ENCODE measurements at regions of chr6 and their contacts with region 1.

Region 1: GRCh38 chr6:6724539-6725467 is 136.3 kb downstream of the LY86 start:
- DNase-seq: peak; percentile 69
- H3K4me3 Mint-ChIP-seq: peak overlapping the region; percentile 17
- H3K27ac Mint-ChIP-seq: peak overlapping the region; percentile 70
- H3K4me1 Mint-ChIP-seq: peaks cover 13% of the 10 kb centered on the region
- H3K27me3 Mint-ChIP-seq: peaks cover 29% of the 10 kb centered on the region

Region 2: DNA sequence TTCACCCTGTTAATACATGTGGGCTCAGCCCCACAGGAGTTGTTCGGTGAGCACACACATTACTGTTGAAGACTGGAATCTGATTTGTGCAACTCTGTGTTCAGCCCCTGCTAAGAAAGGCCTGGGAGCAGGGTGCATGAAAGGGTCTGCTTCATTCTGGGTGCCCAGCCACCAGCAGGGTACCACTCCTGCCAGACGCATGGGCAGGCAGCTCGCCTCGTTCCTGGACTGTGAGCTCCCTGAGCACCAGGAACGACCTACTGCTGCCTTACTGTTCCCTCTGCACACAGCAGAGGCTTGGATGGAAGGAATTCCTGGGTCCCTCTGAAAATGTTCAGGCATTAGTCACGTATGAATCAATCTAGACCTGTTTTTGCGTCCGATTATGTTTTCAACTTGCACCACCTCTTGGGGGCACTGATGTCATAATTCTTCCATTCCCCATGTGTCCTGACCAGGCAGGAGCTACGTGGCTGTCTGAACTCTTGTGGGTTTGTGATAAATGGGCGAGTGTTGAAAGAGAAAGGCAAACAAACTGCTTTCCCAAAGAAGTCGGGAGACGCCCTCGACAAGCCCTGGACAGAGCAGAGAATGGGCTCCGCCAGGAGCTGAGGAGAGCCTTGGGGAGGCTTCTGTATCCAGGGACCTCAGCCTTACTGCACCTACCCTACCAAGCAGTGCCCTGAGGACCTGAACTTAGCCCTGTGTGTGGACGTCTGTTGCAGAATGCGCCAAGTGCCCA is 12.4 kb before region 1 on chr6:
- CTCF ChIA-PET with region 1: interaction called, 19 read pairs
- POLR2A ChIA-PET with region 1: no interaction called
- DNase-seq: no peak
- H3K4me3 Mint-ChIP-seq: peak overlapping the region; percentile 48
- H3K27ac Mint-ChIP-seq: peak overlapping the region; percentile 67
- H3K4me1 Mint-ChIP-seq: peaks cover 40% of the 10 kb centered on the region
- H3K27me3 Mint-ChIP-seq: peaks cover 15% of the 10 kb centered on the region

Region 3: DNA sequence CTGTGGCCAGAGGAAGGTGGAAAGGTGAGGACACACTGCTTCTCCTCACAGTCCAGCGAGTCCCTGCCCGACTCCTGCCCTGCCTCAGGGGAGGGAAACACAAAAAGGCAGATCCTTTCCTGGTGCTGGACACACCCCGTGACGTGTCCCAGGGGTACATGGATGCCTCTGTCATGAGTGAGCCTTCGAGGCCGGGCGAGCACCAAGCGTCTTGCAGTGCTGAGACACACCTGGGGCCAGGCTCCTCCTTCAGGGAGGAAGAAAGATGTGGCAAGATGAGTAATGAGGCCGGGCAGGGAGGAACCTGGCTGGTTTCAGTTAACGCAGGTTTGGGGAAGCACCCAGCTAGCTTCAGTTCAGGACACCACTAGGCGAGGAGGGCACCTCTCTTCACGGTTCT is 78.8 kb after region 1 on chr6:
- CTCF ChIA-PET with region 1: no interaction called
- POLR2A ChIA-PET with region 1: no interaction called
- DNase-seq: peak; percentile 21
- H3K4me3 Mint-ChIP-seq: no peak overlapping the region
- H3K27ac Mint-ChIP-seq: no peak overlapping the region
- H3K4me1 Mint-ChIP-seq: peaks cover 32% of the 10 kb centered on the region
- H3K27me3 Mint-ChIP-seq: peaks cover 19% of the 10 kb centered on the region